ENCODE measurements at regions of chr1 and their contacts with region 1.

Region 1: DNA sequence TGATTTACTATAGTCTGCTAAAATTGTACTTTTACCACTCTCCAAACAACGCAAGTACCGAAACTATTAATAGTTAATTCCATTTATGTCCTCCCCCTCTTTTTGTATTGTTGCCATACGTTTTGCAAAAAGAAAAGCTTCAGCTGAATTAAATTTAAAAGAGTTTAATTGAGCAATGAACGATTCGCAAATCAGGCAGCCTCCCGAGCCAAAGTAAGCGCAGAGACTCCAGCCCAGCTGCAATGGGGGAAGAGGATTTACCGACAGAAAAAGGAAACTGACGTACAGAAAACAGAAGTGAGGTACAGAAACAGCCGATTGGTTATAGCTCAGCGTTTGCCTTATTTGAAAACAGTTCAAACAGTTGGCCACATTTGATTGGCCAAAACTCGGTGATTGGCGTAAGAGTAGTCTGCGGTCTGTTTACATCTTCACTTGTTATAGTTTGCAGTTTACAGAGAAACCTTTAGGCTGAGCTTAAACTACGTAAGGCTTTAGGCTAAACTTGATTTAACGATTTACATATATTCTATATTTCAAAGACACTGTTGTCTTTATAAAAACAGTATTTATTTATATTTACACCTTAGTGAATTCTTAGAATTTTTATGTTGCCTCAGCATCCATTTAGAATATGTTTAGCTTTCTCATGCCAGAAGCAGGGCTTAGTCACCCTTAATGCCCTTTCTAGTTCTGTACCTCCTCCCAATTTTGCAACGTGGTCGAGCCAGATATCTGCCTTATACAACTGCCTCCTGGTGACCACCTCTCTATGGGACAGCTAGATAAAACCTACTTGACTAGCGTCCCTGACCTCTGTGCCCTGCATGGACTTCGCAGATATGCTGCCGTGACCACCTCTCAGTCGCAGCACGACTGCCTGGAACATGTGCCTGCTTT is 23.8 kb downstream of the CR1 start:
- DNase-seq: no peak
- H3K4me3 ChIP-seq: no peak overlapping the region
- H3K4me3 Mint-ChIP-seq: no peak overlapping the region
- H3K27ac ChIP-seq: peak overlapping the region; percentile 74
- H3K27ac Mint-ChIP-seq: no peak overlapping the region
- H3K4me1 ChIP-seq: no peaks in the 10 kb centered on the region
- H3K4me1 Mint-ChIP-seq: no peaks in the 10 kb centered on the region
- H3K27me3 ChIP-seq: no peaks in the 10 kb centered on the region
- H3K27me3 Mint-ChIP-seq: peaks cover 6 to 28% of the 10 kb centered on the region in 2 donors

Region 2: GRCh38 chr1:207431508-207431907 is 88.2 kb before region 1 on chr1:
- CTCF ChIA-PET with region 1: no interaction called
- POLR2A ChIA-PET with region 1: interaction called, 11 read pairs
- DNase-seq: no peak
- H3K4me3 ChIP-seq: no peak overlapping the region
- H3K4me3 Mint-ChIP-seq: no peak overlapping the region
- H3K27ac ChIP-seq: no peak overlapping the region
- H3K27ac Mint-ChIP-seq: no peak overlapping the region
- H3K4me1 ChIP-seq: no peaks in the 10 kb centered on the region
- H3K4me1 Mint-ChIP-seq: no peaks in the 10 kb centered on the region
- H3K27me3 ChIP-seq: no peaks in the 10 kb centered on the region
- H3K27me3 Mint-ChIP-seq: peaks cover 0 to 46% of the 10 kb centered on the region in 2 donors

Region 3: DNA sequence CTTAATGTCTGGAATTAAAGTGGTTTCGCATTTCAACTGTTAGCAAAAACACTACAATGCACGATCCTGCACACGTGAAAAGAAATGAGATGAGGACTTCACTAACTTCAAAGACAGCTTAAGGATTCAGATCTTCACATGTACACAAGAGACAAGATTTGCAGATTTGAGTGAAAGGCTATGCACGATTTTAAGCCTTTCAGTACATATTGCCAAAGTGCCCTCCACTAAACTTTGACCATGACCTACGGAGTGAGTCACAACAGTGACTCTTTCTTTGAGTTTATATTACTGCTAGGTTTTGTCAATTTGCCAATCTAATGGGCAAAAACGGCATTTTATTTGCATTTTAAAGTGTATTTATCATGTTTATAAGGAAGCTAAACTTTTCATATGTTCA is 84.0 kb after region 1 on chr1:
- CTCF ChIA-PET with region 1: no interaction called
- POLR2A ChIA-PET with region 1: no interaction called
- DNase-seq: no peak
- H3K4me3 ChIP-seq: no peak overlapping the region
- H3K4me3 Mint-ChIP-seq: no peak overlapping the region
- H3K27ac ChIP-seq: no peak overlapping the region
- H3K27ac Mint-ChIP-seq: no peak overlapping the region
- H3K4me1 ChIP-seq: no peaks in the 10 kb centered on the region
- H3K4me1 Mint-ChIP-seq: no peaks in the 10 kb centered on the region
- H3K27me3 ChIP-seq: no peaks in the 10 kb centered on the region
- H3K27me3 Mint-ChIP-seq: peaks cover 7 to 14% of the 10 kb centered on the region in 2 donors

Measured in CD8-positive, alpha-beta memory T cell (primary cell).